ENCODE measurements at regions of chrX and their contacts with region 1.

Region 1: GRCh38 chrX:45077748-45078424 is 122.8 kb downstream of the DIPK2B start:
- DNase-seq: no peak
- H3K4me3 Mint-ChIP-seq: peak overlapping the region; percentile 45
- H3K27ac Mint-ChIP-seq: peak overlapping the region; percentile 84
- H3K4me1 Mint-ChIP-seq: peaks cover 25% of the 10 kb centered on the region
- H3K27me3 Mint-ChIP-seq: no peaks in the 10 kb centered on the region

Region 2: GRCh38 chrX:44542567-44543325 is 535.1 kb before region 1 on chrX and contains the start of gene FUNDC1:
- intact Hi-C with region 1: loop called (anchors 5 kb)
- DNase-seq: peak; percentile 84
- H3K4me3 Mint-ChIP-seq: peak within 1 kb of the TSS; percentile 91
- H3K27ac Mint-ChIP-seq: peak within 1 kb of the TSS; percentile 88
- H3K4me1 Mint-ChIP-seq: peaks cover 15% of the 10 kb centered on the region
- H3K27me3 Mint-ChIP-seq: no peaks in the 10 kb centered on the region
- total RNA-seq, gene FUNDC1: 9.0 and 10.9 TPM in 2 replicates

Region 3: DNA sequence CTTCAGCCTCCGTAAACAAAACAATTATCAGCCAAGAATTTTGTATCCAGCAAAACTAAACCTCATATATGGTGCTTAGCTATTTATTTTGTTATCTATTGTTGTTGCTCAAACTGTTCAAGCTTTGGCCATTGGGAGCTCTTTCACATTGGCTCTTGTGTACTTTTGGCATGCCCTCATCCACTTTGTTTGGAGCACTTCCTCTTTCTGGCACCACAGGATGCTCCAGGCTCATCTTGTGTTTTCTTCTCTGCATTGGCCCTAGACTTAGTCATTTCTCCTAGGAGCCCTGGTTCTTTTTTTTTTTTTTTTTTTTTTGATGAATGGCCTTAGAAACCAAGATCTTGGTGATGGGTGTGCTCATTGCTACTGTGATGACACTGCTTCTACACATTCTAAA is 48.3 kb after region 1 on chrX:
- intact Hi-C with region 1: no loop called
- DNase-seq: no peak
- H3K4me3 Mint-ChIP-seq: no peak overlapping the region
- H3K27ac Mint-ChIP-seq: no peak overlapping the region
- H3K4me1 Mint-ChIP-seq: no peaks in the 10 kb centered on the region
- H3K27me3 Mint-ChIP-seq: peaks cover 3% of the 10 kb centered on the region

Region 4: GRCh38 chrX:45172890-45173289 is 95.0 kb after region 1 on chrX:
- intact Hi-C with region 1: no loop called
- DNase-seq: no peak
- H3K4me3 Mint-ChIP-seq: no peak overlapping the region
- H3K27ac Mint-ChIP-seq: no peak overlapping the region
- H3K4me1 Mint-ChIP-seq: no peaks in the 10 kb centered on the region
- H3K27me3 Mint-ChIP-seq: no peaks in the 10 kb centered on the region

Measured in activated T-helper 2 cell treated with anti-CD3 and anti-CD28 coated beads, Interferon-gamma antibody, Interleukin-2, Interleukin-4, amounts not matched to agents 10 μg/mL and 5 μg/mL and 100 μg/mL, durations not matched to agents 14 hours and 24 hours and 36 hours (primary cell).